ENCODE measurements at regions of chr14 and their contacts with region 1.

Region 1: DNA sequence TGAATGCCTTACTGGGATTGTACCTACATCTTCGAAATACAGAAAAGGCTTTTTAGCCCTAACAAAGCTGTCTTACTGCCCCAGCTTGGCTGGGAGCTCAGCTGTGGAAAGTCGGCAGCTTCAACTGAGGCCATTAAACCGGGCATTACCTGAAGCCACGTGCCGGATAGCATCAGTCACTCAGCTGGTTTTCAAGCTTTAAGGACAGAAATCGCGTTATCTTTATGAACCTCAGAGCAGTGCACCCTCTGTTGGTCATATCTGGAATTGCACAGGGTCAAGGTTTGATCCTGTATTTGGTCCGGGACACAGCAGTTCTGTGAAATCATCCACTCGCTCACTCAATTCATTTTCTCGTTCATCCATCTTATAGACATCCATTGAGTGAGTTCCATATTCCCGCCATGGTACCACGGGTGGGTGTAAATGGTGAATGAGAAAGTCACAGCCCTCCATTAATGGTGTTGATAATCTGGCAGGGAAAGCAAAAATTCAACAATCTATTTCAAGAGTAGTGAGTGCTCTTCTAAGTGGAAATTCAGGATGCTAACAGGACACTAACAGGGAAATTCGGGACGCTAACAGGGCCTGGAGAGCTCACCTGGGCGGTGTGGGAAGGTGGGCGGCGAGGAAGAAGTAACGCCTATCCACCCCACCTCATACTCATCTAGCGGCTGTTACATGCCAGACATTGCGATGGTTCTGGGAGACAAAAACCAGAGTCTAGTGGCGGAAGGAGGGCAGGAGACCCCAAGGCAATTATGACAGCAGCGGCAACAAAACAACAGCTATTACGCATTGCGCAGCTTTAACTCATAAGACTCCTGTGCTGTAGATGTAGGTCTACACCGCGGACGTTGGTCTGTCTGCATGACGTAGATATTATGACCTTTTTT is 60.6 kb upstream of the TCL1A start:
- DNase-seq: peak; percentile 14
- H3K4me3 Mint-ChIP-seq: no peak overlapping the region
- H3K27ac Mint-ChIP-seq: no peak overlapping the region
- H3K4me1 Mint-ChIP-seq: no peaks in the 10 kb centered on the region
- H3K27me3 Mint-ChIP-seq: peaks cover 5% of the 10 kb centered on the region

Region 2: DNA sequence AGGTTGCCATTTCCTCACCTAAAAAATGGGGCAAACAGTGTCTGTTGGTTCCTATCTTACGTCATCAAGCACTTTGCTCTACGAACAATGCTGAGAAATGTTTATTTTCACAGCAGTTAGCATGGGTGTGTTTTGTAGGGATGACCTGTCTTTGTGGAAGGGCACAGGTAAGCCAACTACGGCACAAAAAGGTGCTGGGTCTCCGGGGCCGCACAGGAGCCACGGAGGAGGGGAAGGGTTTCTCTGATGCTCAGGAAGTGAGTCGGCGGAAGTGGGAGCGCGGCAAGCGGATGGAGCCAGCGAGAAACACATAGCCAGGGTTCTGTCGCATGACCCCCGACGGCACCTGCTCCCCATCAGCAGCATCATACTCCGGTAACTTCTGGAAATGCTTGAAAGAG is 153.9 kb before region 1 on chr14:
- intact Hi-C with region 1: no loop called
- DNase-seq: no peak
- H3K4me3 Mint-ChIP-seq: peak overlapping the region; percentile 29
- H3K27ac Mint-ChIP-seq: no peak overlapping the region
- H3K4me1 Mint-ChIP-seq: no peaks in the 10 kb centered on the region
- H3K27me3 Mint-ChIP-seq: peaks cover 2% of the 10 kb centered on the region

Region 3: GRCh38 chr14:95993768-95994592 is 219.5 kb after region 1 on chr14:
- intact Hi-C with region 1: loop called (anchors 10 kb)
- DNase-seq: peak; percentile 3
- H3K4me3 Mint-ChIP-seq: no peak overlapping the region
- H3K27ac Mint-ChIP-seq: no peak overlapping the region
- H3K4me1 Mint-ChIP-seq: no peaks in the 10 kb centered on the region
- H3K27me3 Mint-ChIP-seq: peaks cover 3% of the 10 kb centered on the region